Cardiac septum (tissue), 1 donor: ENCODE measurements at regions of chr3 and their contacts with region 1.

Region 1: GRCh38 chr3:69739204-69740102 is at the start of gene MITF:
- DNase-seq: peak; percentile 94
- total RNA-seq, gene MITF: 97.6 TPM

Region 2: DNA sequence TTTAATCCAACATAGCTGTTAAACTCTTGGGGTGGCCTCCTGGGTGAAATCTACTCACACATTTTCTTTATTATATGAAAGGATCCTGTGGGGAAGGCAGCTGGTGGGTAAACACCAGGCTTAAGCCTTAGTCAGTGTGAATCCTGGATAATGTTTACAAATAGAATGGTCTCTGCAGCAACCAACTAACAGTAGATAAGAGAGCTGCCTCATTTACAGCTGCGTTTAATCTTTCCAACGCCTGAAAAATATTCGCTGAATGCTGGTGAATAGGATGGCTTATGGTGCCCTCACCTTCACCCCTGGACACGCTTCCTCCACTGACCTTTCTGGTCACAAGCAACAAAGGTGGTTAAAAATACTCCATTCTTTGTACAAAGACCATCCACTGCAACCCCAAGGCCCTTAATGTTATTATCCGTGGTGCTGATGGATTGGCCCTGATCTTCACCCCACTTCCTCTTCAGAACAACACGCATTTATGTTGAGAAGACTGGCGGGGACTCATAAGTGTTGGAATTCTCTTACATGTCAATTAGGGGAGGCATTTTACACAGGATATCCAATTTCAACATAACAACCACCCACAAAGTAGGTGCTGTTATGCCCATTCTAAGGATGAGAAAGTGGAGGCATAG is 233.6 kb before region 1 on chr3:
- intact Hi-C with region 1: no loop called
- DNase-seq: no peak

Region 3: GRCh38 chr3:69784954-69785514 is 45.6 kb after region 1 on chr3:
- intact Hi-C with region 1: loop called (anchors 5 kb)
- DNase-seq: peak; percentile 79